ENCODE measurements at regions of chr2 and their contacts with region 1.

Region 1: DNA sequence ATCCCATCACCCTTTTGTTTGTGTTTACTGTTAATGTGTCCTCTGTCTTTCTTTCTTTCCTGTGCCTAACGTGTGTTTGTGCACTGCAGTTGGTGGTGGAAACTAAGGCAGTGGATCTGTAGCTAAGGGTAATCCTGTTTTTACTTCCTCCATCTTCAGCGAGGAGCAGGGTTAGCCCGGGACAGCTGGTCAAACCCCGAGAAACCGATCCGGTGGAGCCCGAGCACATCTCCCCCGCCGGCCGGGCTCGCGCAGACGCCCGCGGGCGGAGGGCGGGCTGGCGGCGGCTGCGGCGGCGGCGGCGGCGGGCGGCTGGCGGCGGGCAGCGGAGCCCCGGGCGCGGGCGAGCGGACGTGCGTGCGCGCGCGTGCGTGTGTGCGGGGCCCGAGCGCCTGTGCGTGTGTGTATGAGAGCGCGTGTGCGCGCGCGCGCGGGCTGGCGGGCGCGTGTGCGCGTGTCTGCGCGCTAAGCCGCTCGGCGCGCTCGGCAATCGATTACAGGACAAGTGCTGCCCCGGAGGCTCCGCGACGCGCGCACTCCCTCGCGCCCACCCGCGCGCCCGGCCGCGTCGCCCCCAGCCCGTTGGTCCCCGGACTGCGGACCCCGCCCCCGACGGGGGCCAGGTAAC is at the start of gene IKZF2:
- DNase-seq: peak; percentile 72 to 78 (median 72)
- H3K4me3 ChIP-seq: peak within 1 kb of the TSS; percentile 64 to 68
- H3K4me3 Mint-ChIP-seq: peak within 1 kb of the TSS; percentile 90 to 96 (median 94)
- H3K27ac ChIP-seq: peak within 1 kb of the TSS; percentile 50
- H3K27ac Mint-ChIP-seq: peak within 1 kb of the TSS; percentile 65 to 92 (median 88)
- H3K4me1 ChIP-seq: peaks cover 7% of the 10 kb centered on the region
- H3K4me1 Mint-ChIP-seq: peaks cover 14 to 39% (median 23%) of the 10 kb centered on the region in 4 donors
- H3K27me3 ChIP-seq: no peaks in the 10 kb centered on the region
- H3K27me3 Mint-ChIP-seq: peaks cover 12 to 22% of the 10 kb centered on the region in 2 donors
- total RNA-seq, gene IKZF2: 13.2 to 15.0 TPM

Region 2: GRCh38 chr2:212628586-212628985 is 523.0 kb before region 1 on chr2:
- CTCF ChIA-PET with region 1: no interaction called
- POLR2A ChIA-PET with region 1: no interaction called
- intact Hi-C with region 1: no loop called
- DNase-seq: no peak
- H3K4me3 ChIP-seq: no peak overlapping the region
- H3K4me3 Mint-ChIP-seq: no peak overlapping the region
- H3K27ac ChIP-seq: no peak overlapping the region
- H3K27ac Mint-ChIP-seq: no peak overlapping the region
- H3K4me1 ChIP-seq: no peaks in the 10 kb centered on the region
- H3K4me1 Mint-ChIP-seq: no peaks in the 10 kb centered on the region
- H3K27me3 ChIP-seq: no peaks in the 10 kb centered on the region
- H3K27me3 Mint-ChIP-seq: no peaks in the 10 kb centered on the region

Region 3: GRCh38 chr2:212686285-212686895 is 465.2 kb before region 1 on chr2:
- CTCF ChIA-PET with region 1: interaction called, 4 read pairs
- POLR2A ChIA-PET with region 1: no interaction called
- intact Hi-C with region 1: loop called (anchors 1 kb)
- DNase-seq: peak in 4 of 5 donors; percentile 15 to 38 (median 24)
- H3K4me3 ChIP-seq: no peak overlapping the region
- H3K4me3 Mint-ChIP-seq: no peak overlapping the region
- H3K27ac ChIP-seq: no peak overlapping the region
- H3K27ac Mint-ChIP-seq: no peak overlapping the region
- H3K4me1 ChIP-seq: no peaks in the 10 kb centered on the region
- H3K4me1 Mint-ChIP-seq: no peaks in the 10 kb centered on the region
- H3K27me3 ChIP-seq: no peaks in the 10 kb centered on the region
- H3K27me3 Mint-ChIP-seq: peaks cover 0 to 4% of the 10 kb centered on the region in 2 donors

Region 4: DNA sequence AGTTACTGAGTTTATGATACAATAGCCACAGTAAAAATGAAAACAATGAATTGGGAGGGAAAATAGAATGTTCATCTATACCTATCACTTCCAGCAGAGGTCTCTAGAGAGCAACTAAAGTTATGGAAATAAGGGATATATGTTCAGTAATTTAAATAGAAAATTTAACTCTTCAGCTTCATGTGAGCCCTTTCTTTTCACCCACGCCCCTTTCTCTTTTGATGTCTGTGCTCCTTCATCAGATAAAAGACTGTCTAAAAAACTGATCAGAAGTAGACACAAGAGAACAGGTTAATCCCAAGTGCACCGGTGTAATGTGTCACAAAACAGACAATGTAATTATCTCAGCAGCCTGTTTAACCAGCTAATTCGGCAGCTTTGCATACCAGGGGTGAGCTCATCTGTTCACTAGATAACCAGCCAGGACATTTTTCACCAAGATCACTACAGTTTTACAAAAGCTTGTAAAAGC is 374.5 kb before region 1 on chr2:
- CTCF ChIA-PET with region 1: interaction called, 32 read pairs
- POLR2A ChIA-PET with region 1: interaction called, 3 read pairs
- intact Hi-C with region 1: no loop called
- DNase-seq: peak; percentile 6 to 36 (median 13)
- H3K4me3 ChIP-seq: no peak overlapping the region
- H3K4me3 Mint-ChIP-seq: no peak overlapping the region
- H3K27ac ChIP-seq: no peak overlapping the region
- H3K27ac Mint-ChIP-seq: no peak overlapping the region
- H3K4me1 ChIP-seq: no peaks in the 10 kb centered on the region
- H3K4me1 Mint-ChIP-seq: peaks cover 0 to 5% (median 0%) of the 10 kb centered on the region in 4 donors
- H3K27me3 ChIP-seq: no peaks in the 10 kb centered on the region
- H3K27me3 Mint-ChIP-seq: no peaks in the 10 kb centered on the region

Region 5: DNA sequence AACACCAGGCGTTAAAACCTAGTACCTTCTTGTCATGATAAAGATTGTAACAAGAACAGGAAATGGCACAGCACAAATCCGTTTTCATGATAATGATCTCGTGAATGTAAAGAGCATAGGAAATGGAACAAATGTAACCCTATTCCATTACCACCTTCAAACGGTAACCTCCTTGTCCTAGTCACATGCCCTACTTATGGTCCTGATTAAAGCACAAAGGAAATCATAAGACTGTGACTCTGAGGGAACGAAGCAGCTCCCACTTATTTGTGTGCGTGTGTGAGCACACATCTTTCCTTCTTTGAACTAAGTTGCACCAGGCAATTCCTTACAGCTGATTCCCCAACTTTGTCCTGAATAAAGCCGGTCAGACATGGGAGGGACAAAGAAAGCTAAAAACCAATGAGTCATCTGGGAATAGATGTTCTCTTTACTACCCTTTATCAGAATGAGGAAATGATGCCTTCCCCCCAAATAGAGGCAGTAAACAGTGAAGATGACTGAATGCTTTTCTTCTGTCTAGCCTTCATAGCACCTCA is 192.7 kb before region 1 on chr2:
- CTCF ChIA-PET with region 1: no interaction called
- POLR2A ChIA-PET with region 1: no interaction called
- intact Hi-C with region 1: loop called (anchors 5 kb)
- DNase-seq: peak in 3 of 5 donors; percentile 1 to 24 (median 16)
- H3K4me3 ChIP-seq: no peak overlapping the region
- H3K4me3 Mint-ChIP-seq: peak overlapping the region in 7 of 8 donors; percentile 5 to 67 (median 51)
- H3K27ac ChIP-seq: no peak overlapping the region
- H3K27ac Mint-ChIP-seq: peak overlapping the region; percentile 5 to 72 (median 57)
- H3K4me1 ChIP-seq: peaks cover 9% of the 10 kb centered on the region
- H3K4me1 Mint-ChIP-seq: peaks cover 12 to 33% (median 25%) of the 10 kb centered on the region in 4 donors
- H3K27me3 ChIP-seq: no peaks in the 10 kb centered on the region
- H3K27me3 Mint-ChIP-seq: peaks cover 0 to 1% of the 10 kb centered on the region in 2 donors

Region 6: DNA sequence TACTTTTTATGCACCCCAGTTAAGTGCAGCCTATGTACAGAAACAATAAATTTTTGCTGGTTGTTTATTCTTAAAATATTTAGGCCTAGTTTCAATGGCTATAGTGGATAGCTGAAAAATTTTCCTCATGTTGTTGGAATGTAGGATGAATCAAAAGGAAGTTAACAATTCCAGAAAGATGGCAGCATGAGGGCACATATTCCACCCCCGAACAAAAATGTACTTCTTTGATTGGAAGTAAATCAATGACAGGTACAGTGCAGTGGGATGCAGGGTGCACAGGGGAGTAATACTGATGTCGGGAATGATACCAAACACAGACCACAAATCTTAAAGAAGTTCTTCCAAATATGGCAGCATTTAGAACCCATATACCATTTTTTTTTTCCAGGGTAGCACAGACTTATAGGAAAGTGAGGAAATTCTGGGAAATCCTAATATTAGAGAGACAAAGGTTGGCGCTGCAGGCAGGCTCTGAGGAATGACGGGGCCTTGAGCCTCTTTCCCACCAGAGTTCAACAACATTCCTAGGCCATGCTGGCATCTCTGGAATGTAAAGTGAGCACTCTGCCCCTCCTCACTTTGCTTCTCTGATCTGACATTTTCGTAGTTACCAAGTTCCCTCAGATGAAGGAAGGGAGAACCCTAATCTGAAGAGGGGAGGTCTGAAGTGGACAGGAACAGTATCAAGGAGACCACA is 36.4 kb after region 1 on chr2:
- CTCF ChIA-PET with region 1: no interaction called
- POLR2A ChIA-PET with region 1: no interaction called
- intact Hi-C with region 1: no loop called
- DNase-seq: no peak
- H3K4me3 ChIP-seq: no peak overlapping the region
- H3K4me3 Mint-ChIP-seq: no peak overlapping the region
- H3K27ac ChIP-seq: no peak overlapping the region
- H3K27ac Mint-ChIP-seq: no peak overlapping the region
- H3K4me1 ChIP-seq: no peaks in the 10 kb centered on the region
- H3K4me1 Mint-ChIP-seq: no peaks in the 10 kb centered on the region
- H3K27me3 ChIP-seq: no peaks in the 10 kb centered on the region
- H3K27me3 Mint-ChIP-seq: no peaks in the 10 kb centered on the region

Region 7: DNA sequence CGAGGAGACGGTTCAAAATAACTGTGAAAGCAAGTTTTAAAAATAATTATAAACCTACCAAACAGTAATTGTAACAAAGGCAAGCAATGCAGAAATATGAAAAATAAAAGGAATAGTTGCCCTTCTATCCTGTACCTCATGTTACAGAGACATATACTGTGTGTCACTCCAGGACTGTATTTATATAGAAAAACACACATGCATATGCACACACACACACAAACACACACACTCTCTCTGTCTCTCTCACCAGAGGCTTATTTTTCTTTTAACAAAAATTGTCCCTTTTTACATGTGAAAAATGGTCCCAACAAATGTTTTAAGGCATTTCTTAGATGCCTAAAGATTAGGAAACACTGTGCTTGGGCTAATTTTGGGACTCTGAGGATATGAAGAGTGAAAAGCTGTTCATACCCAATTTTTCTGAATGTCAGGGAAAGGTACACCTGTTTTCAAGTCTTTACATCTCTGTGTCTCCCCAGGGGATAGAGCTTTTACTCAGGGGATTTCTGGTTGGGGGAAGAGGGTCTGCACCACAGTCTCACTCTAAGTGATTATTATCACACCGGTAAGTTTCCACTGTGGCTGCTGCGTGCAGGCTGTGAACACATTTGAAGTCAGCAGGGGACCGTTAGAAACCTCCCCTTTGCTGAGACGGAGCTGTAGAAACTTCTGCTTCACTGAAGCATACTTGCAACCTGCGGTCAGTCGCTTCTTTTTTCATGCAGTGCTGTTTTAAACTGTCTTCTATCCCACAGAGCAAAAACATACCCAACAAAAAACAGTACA is 81.3 kb after region 1 on chr2:
- CTCF ChIA-PET with region 1: no interaction called
- POLR2A ChIA-PET with region 1: interaction called, 3 read pairs
- intact Hi-C with region 1: loop called (anchors 2 kb)
- DNase-seq: peak in 4 of 5 donors; percentile 11 to 57 (median 16)
- H3K4me3 ChIP-seq: peak overlapping the region in 1 of 2 donors; percentile 5
- H3K4me3 Mint-ChIP-seq: peak overlapping the region in 6 of 8 donors; percentile 10 to 56 (median 38)
- H3K27ac ChIP-seq: peak overlapping the region; percentile 23
- H3K27ac Mint-ChIP-seq: peak overlapping the region in 6 of 7 donors; percentile 3 to 61 (median 28)
- H3K4me1 ChIP-seq: no peaks in the 10 kb centered on the region
- H3K4me1 Mint-ChIP-seq: peaks cover 7 to 18% (median 12%) of the 10 kb centered on the region in 4 donors
- H3K27me3 ChIP-seq: no peaks in the 10 kb centered on the region
- H3K27me3 Mint-ChIP-seq: peaks cover 0 to 5% of the 10 kb centered on the region in 2 donors

Region 8: GRCh38 chr2:213353419-213353818 is 201.9 kb after region 1 on chr2:
- CTCF ChIA-PET with region 1: no interaction called
- POLR2A ChIA-PET with region 1: no interaction called
- intact Hi-C with region 1: no loop called
- DNase-seq: no peak
- H3K4me3 ChIP-seq: no peak overlapping the region
- H3K4me3 Mint-ChIP-seq: no peak overlapping the region
- H3K27ac ChIP-seq: no peak overlapping the region
- H3K27ac Mint-ChIP-seq: no peak overlapping the region
- H3K4me1 ChIP-seq: no peaks in the 10 kb centered on the region
- H3K4me1 Mint-ChIP-seq: no peaks in the 10 kb centered on the region
- H3K27me3 ChIP-seq: no peaks in the 10 kb centered on the region
- H3K27me3 Mint-ChIP-seq: no peaks in the 10 kb centered on the region